SK-N-SH (cell line): ENCODE measurements at regions of chr5 and their contacts with region 1.

Region 1: DNA sequence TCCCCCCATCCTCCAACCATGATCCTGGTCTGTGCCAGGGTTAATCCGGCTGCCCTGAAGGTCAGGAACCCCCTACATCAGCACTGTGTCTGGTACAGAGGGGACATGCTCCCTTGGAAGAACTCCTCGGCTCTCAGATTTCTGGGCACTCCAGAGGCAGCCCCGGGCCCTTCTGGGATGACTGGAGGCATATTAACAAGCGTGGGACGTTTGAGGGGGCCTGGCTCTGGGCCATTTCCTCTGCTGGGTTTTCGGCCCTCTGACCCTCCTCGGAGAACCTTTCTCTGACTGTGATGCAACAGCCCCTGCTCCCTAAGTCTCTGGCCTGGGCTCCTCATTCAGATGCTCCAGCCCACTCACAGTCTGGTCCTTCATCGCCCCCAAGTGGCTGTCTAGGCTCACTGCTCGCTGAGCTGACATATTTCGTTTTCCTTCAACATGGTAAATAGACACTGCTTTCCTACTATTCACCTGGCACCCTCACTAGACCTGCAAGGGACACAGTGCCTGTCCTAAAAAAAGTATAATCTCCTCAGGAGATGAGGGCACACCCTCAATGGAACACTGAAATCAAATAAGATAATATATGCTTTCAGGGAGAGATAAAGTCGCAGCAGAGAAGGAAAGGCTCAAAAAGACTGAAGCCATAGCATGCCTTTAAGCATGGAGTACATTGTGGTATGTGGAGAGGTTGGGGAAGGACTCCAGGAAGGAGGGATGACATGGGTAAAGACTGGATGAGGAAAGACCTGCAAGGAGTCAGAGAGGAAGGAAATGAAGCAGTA is 404.7 kb upstream of the TRPC7 start:
- DNase-seq: peak; percentile 73
- H3K4me3 ChIP-seq: no peak overlapping the region; a peak in 1 of 4 replicates
- H3K27ac ChIP-seq: no peak overlapping the region
- H3K4me1 ChIP-seq: no peaks in the 10 kb centered on the region; a peak in 1 of 4 replicates
- H3K27me3 ChIP-seq: no peaks in the 10 kb centered on the region; the same call in none of the 2 replicates
- CTCF ChIP-seq: peak; percentile 91
- EP300 ChIP-seq: no peak
- RAD21 ChIP-seq: peak; percentile 92

Region 2: GRCh38 chr5:136522217-136522956 is 247.7 kb before region 1 on chr5:
- CTCF ChIA-PET with region 1: no interaction called
- POLR2A ChIA-PET with region 1: no interaction called
- DNase-seq: no peak
- H3K4me3 ChIP-seq: no peak overlapping the region
- H3K27ac ChIP-seq: no peak overlapping the region
- H3K4me1 ChIP-seq: no peaks in the 10 kb centered on the region
- H3K27me3 ChIP-seq: 0 out of 2 replicates have a peak, but pooled peaks cover 4% of the 10 kb centered on the region
- CTCF ChIP-seq: no peak
- EP300 ChIP-seq: no peak
- RAD21 ChIP-seq: no peak

Region 3: DNA sequence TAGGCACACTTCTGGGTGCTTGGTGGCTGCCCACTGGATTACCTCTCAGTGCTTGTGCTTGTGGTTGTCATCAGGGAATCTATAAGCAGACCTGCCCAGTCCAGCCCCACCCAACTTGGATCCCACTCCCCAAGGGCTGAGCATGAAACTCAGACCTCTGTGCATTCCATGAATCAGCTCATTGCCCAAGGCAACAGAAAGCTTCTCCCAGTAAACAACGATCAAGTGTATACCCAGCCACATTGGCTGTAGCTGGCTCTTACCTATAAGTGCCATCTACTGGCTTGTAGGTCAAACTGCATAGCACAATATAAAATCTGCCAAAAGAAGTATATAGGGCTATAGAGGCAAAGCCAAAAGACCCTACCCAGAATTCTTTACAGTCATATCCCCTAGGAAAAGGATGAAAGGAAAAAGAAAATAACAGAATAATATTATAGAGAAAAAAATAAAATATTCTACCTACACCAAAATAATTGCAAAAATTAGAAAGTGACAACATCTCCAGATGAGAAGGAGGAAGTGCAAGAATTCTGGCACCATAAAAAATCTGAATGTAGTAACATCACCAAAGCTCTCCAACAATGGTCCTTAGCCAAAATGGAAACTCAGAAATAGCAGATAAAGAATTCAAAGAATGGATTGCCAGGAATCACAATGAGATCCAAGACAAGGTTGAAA is 83.8 kb before region 1 on chr5:
- CTCF ChIA-PET with region 1: interaction called, 11 read pairs
- POLR2A ChIA-PET with region 1: no interaction called
- DNase-seq: no peak
- H3K4me3 ChIP-seq: no peak overlapping the region; a peak in 1 of 4 replicates
- H3K27ac ChIP-seq: no peak overlapping the region
- H3K4me1 ChIP-seq: no peaks in the 10 kb centered on the region
- H3K27me3 ChIP-seq: no peaks in the 10 kb centered on the region
- CTCF ChIP-seq: peak; percentile 55
- EP300 ChIP-seq: no peak
- RAD21 ChIP-seq: peak; percentile 65

Region 4: DNA sequence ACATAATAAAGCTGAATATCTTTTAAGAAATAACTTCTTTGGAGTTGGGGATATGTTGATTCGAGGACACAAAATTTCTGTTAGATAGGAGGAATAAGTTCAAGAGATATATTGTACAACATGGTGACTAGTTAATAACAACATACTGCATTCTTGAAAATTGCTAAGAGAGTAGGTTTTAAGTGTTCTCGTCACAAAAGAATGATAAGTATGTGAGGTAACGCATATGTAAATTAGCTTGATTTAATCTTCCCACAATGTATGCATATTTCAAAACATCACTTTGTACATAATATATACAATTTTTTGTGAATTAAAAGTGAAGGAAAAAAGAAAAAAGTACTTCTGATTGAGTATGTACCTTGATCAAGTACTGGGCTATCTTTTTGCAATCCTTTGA is 23.2 kb after region 1 on chr5:
- CTCF ChIA-PET with region 1: interaction called, 14 read pairs
- POLR2A ChIA-PET with region 1: no interaction called
- DNase-seq: no peak
- H3K4me3 ChIP-seq: no peak overlapping the region
- H3K27ac ChIP-seq: no peak overlapping the region
- H3K4me1 ChIP-seq: no peaks in the 10 kb centered on the region
- H3K27me3 ChIP-seq: peaks cover 5% of the 10 kb centered on the region; the same call in 1 of the 2 replicates
- CTCF ChIP-seq: no peak
- EP300 ChIP-seq: no peak
- RAD21 ChIP-seq: no peak

Region 5: GRCh38 chr5:136853971-136854370 is 83.9 kb after region 1 on chr5:
- CTCF ChIA-PET with region 1: no interaction called
- POLR2A ChIA-PET with region 1: no interaction called
- DNase-seq: no peak
- H3K4me3 ChIP-seq: no peak overlapping the region
- H3K27ac ChIP-seq: no peak overlapping the region
- H3K4me1 ChIP-seq: no peaks in the 10 kb centered on the region
- H3K27me3 ChIP-seq: 0 out of 2 replicates have a peak, but pooled peaks cover 5% of the 10 kb centered on the region
- CTCF ChIP-seq: no peak
- EP300 ChIP-seq: no peak
- RAD21 ChIP-seq: no peak